ENCODE measurements at regions of chr10 and their contacts with region 1.

Region 1: GRCh38 chr10:80662577-80663261 is 125.0 kb downstream of the SH2D4B start:
- DNase-seq: peak; percentile 84 to 87
- ATAC-seq: peak; percentile 82 to 93
- H3K4me3 ChIP-seq: peak overlapping the region; percentile 35
- H3K27ac ChIP-seq: peak overlapping the region; percentile 65 to 76
- H3K4me1 ChIP-seq: peaks cover 4% of the 10 kb centered on the region; the same call in 2 of the 3 replicates
- CTCF ChIP-seq: peak; percentile 88
- EP300 ChIP-seq: no peak
- POLR2A ChIP-seq: no peak
- RAD21 ChIP-seq: peak; percentile 57 to 67

Region 2: GRCh38 chr10:80632742-80633141 is 30.0 kb before region 1 on chr10:
- CTCF ChIA-PET with region 1: interaction called, 15 read pairs
- POLR2A ChIA-PET with region 1: no interaction called
- DNase-seq: no peak
- ATAC-seq: no peak
- H3K4me3 ChIP-seq: no peak overlapping the region
- H3K27ac ChIP-seq: no peak overlapping the region
- H3K4me1 ChIP-seq: no peaks in the 10 kb centered on the region
- CTCF ChIP-seq: no peak
- EP300 ChIP-seq: no peak
- POLR2A ChIP-seq: no peak
- RAD21 ChIP-seq: no peak

Region 3: DNA sequence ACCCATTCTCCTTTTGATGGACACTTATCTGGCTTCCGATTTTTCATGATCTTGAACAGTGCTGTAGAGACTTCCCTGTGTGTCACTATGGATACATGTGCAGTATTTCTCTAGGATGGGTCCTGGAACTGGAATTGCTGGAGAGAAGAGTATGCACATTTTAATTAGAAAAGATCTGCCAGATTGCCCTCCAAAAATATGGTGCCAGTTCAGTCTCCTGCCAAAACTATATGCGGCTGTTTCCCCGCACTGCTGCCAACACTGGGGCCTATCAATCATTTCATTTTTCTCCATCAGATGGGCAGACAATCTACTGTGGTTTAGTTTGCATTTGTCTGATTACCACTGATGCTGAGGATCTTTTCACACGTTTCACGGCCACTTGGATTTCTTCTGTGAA is 20.1 kb before region 1 on chr10:
- CTCF ChIA-PET with region 1: interaction called, 11 read pairs
- POLR2A ChIA-PET with region 1: no interaction called
- DNase-seq: no peak
- ATAC-seq: no peak
- H3K4me3 ChIP-seq: no peak overlapping the region
- H3K27ac ChIP-seq: no peak overlapping the region
- H3K4me1 ChIP-seq: no peaks in the 10 kb centered on the region
- CTCF ChIP-seq: no peak
- EP300 ChIP-seq: no peak
- POLR2A ChIP-seq: no peak
- RAD21 ChIP-seq: no peak

Region 4: DNA sequence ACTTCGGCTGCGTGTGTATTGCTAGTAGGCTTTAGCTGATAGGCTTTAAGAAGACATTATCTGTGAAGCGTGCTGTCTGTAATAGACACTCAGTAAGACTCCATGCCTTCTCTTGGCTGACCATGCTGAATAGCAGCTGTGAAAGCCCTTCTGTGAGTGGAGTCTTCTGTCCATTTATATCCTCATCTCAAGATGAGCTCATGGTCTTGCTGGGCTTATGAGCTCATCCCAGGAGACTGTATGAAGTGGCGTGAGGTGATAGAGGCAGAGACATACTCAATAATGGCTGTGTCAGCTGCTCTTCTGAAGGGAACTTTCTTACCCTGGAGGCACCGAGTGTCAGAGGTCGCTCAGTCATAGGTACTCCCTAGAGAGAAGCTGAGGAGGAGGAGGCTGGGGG is 13.5 kb before region 1 on chr10:
- CTCF ChIA-PET with region 1: interaction called, 52 read pairs
- POLR2A ChIA-PET with region 1: no interaction called
- DNase-seq: no peak
- ATAC-seq: no peak
- H3K4me3 ChIP-seq: no peak overlapping the region
- H3K27ac ChIP-seq: no peak overlapping the region
- H3K4me1 ChIP-seq: no peaks in the 10 kb centered on the region
- CTCF ChIP-seq: no peak
- EP300 ChIP-seq: no peak
- POLR2A ChIP-seq: no peak
- RAD21 ChIP-seq: no peak

Region 5: GRCh38 chr10:80699602-80700039 is 36.9 kb after region 1 on chr10:
- CTCF ChIA-PET with region 1: interaction called, 53 read pairs
- POLR2A ChIA-PET with region 1: no interaction called
- DNase-seq: peak; percentile 59 to 73
- ATAC-seq: peak; percentile 87 to 97
- H3K4me3 ChIP-seq: no peak overlapping the region
- H3K27ac ChIP-seq: no peak overlapping the region
- H3K4me1 ChIP-seq: no peaks in the 10 kb centered on the region
- CTCF ChIP-seq: peak; percentile 81
- EP300 ChIP-seq: no peak
- POLR2A ChIP-seq: no peak
- RAD21 ChIP-seq: peak; percentile 81 to 86

Region 6: DNA sequence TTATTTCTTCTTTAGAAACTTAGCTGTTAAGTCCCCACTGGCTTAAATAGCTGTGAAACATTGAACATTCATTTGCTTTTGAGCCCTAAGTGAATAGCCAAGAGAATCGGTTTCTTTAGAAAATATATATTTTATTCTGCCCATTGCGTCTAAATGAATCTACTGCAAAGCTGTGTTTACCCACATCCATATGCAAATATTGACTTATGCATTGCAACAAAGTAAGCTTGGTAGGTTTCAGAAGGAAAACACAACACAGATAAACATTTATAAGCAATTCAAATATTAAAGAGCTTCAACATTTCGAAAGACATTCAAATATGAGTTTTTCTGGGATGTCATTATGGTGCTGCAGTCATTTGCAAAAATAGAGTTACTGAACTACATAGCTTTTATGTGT is 132.3 kb after region 1 on chr10:
- CTCF ChIA-PET with region 1: no interaction called
- POLR2A ChIA-PET with region 1: no interaction called
- DNase-seq: no peak
- ATAC-seq: no peak
- H3K4me3 ChIP-seq: no peak overlapping the region
- H3K27ac ChIP-seq: no peak overlapping the region
- H3K4me1 ChIP-seq: no peaks in the 10 kb centered on the region
- CTCF ChIP-seq: no peak
- EP300 ChIP-seq: no peak
- POLR2A ChIP-seq: no peak
- RAD21 ChIP-seq: no peak

Region 7: DNA sequence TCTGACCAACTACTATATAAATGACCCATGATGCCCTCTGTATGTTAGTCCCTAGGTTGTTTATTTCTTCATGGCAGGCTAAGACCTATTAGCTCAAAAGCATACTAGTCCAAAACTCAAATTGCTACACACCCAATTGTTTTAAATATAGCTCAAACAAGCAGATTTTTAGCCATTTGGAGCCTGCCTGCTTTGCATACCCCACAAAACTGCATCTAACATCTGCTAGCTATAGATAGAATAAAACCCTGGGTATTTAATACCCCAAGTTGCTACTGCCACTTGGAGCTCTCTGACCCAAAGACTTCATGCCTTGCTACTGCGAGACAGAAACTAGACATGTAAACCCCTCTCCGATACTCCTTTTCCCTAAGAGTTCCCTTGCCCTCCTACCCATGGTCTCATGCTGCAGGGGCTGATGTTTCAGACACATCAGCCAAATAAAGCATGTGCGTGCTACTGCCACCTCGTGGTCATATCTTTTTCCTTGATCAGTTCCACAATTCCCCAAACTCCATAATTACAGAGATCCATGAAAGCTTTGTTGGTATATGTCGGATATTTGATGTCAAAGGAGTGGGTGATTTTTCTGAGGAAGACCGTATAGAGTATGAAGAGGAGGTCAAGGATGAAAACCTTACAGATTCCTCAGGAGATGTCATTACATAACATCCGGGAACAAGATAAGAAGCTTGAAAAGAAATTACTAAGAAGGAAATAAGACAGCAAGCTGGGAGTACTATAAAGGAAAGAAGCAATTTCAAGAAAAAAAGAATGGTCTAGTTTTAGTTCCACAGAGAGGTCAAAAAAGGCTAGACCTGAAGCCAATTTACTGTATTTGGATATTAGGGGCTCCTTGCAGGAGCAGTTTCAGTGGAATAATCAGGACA is 261.6 kb after region 1 on chr10:
- CTCF ChIA-PET with region 1: interaction called, 33 read pairs
- POLR2A ChIA-PET with region 1: no interaction called
- DNase-seq: peak; percentile 7 to 51
- ATAC-seq: peak; percentile 78 to 90; a peak in 4 of 6 replicates
- H3K4me3 ChIP-seq: no peak overlapping the region
- H3K27ac ChIP-seq: no peak overlapping the region
- H3K4me1 ChIP-seq: no peaks in the 10 kb centered on the region
- CTCF ChIP-seq: peak; percentile 76
- EP300 ChIP-seq: no peak
- POLR2A ChIP-seq: no peak
- RAD21 ChIP-seq: peak; percentile 51 to 58; a peak in 4 of 5 replicates